PC-3 (cell line): ENCODE measurements at regions of chr1 and their contacts with region 1.

Region 1: GRCh38 chr1:31955917-31956736 is 18.0 kb upstream of the PTP4A2 start:
- DNase-seq: peak; percentile 98
- ATAC-seq: peak; percentile 90
- H3K4me3 ChIP-seq: no peak overlapping the region
- H3K27ac ChIP-seq: peak overlapping the region; percentile 99
- H3K4me1 ChIP-seq: peaks cover 25% of the 10 kb centered on the region
- H3K27me3 ChIP-seq: no peaks in the 10 kb centered on the region
- CTCF ChIP-seq: peak; percentile 48

Region 2: GRCh38 chr1:31815752-31816500 is 140.2 kb before region 1 on chr1 and contains the start of gene SPOCD1:
- CTCF ChIA-PET with region 1: no interaction called
- POLR2A ChIA-PET with region 1: interaction called, 3 read pairs
- intact Hi-C with region 1: loop called (anchors 5 kb)
- DNase-seq: peak; percentile 86
- ATAC-seq: peak; percentile 92
- H3K4me3 ChIP-seq: peak within 1 kb of the TSS; percentile 38; the same call in 1 of the 2 replicates
- H3K27ac ChIP-seq: no peak within 1 kb of the TSS
- H3K4me1 ChIP-seq: no peaks in the 10 kb centered on the region
- H3K27me3 ChIP-seq: no peaks in the 10 kb centered on the region
- CTCF ChIP-seq: peak; percentile 92
- total RNA-seq, gene SPOCD1: 4.1 and 5.4 TPM in 2 replicates

Region 3: DNA sequence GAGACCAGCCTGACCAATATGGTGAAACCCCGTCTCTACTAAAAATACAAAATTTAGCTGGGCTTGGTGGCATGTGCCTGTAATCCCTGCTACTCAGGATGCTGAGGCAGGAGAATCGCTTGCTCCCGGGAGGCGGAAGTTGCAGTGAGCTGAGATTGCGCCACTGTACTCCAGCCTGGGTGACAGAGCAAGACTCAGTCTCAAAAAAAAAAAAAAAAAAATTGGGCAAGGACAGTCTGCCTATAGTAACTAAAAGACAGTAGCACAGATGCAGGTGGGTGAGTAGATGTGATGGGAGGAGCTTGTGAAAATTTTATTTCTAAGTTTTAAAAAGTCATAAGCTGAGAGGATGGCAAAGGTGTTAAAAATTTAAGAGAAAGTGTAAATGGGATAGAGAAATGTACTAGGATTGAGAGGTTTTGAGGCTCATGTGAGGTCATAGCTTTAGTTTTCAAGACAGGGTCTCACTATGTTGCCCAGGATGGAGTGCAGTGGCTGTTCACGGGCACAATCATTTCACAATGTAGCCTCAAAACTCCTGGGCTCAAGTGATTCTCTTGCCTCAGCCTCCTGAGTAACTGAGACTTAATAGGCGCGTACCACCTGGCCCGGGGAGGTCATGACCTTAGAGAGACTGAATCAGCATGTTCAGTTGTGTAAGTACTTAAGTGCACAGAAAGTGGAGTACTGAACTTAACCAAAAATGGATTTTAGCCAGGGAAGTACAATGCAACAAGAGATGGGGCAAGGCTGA is 51.6 kb before region 1 on chr1:
- CTCF ChIA-PET with region 1: no interaction called
- POLR2A ChIA-PET with region 1: no interaction called
- intact Hi-C with region 1: no loop called
- DNase-seq: peak; percentile 14
- ATAC-seq: no peak
- H3K4me3 ChIP-seq: no peak overlapping the region
- H3K27ac ChIP-seq: no peak overlapping the region
- H3K4me1 ChIP-seq: no peaks in the 10 kb centered on the region
- H3K27me3 ChIP-seq: no peaks in the 10 kb centered on the region
- CTCF ChIP-seq: no peak

Region 4: GRCh38 chr1:32013386-32014198 is 57.5 kb after region 1 on chr1 and contains the start of gene KHDRBS1:
- CTCF ChIA-PET with region 1: no interaction called
- POLR2A ChIA-PET with region 1: no interaction called
- intact Hi-C with region 1: no loop called
- DNase-seq: peak; percentile 99
- ATAC-seq: peak; percentile 84
- H3K4me3 ChIP-seq: peak within 1 kb of the TSS; percentile 97
- H3K27ac ChIP-seq: peak within 1 kb of the TSS; percentile 75
- H3K4me1 ChIP-seq: peaks cover 13% of the 10 kb centered on the region; the same call in 1 of the 2 replicates
- H3K27me3 ChIP-seq: no peaks in the 10 kb centered on the region
- CTCF ChIP-seq: no peak
- total RNA-seq, gene KHDRBS1: 86.7 and 114 TPM in 2 replicates